ENCODE measurements at regions of chr17 and their contacts with region 1.

Region 1: GRCh38 chr17:76384222-76384986 is at the start of gene SPHK1:
- DNase-seq: peak; percentile 51
- ATAC-seq: peak; percentile 82
- H3K4me3 ChIP-seq: peak within 1 kb of the TSS; percentile 56 to 73
- H3K27ac ChIP-seq: peak within 1 kb of the TSS; percentile 45; the same call in 1 of the 2 replicates
- H3K4me1 ChIP-seq: peaks cover 26 to 41% of the 10 kb centered on the region in 2 experiments
- H3K27me3 ChIP-seq: peaks cover 11% of the 10 kb centered on the region; the same call in 1 of the 2 replicates
- CTCF ChIP-seq: no peak
- POLR2A ChIP-seq: peak; percentile 53
- RAD21 ChIP-seq: no peak
- total RNA-seq, gene SPHK1: 4.6 TPM

Region 2: DNA sequence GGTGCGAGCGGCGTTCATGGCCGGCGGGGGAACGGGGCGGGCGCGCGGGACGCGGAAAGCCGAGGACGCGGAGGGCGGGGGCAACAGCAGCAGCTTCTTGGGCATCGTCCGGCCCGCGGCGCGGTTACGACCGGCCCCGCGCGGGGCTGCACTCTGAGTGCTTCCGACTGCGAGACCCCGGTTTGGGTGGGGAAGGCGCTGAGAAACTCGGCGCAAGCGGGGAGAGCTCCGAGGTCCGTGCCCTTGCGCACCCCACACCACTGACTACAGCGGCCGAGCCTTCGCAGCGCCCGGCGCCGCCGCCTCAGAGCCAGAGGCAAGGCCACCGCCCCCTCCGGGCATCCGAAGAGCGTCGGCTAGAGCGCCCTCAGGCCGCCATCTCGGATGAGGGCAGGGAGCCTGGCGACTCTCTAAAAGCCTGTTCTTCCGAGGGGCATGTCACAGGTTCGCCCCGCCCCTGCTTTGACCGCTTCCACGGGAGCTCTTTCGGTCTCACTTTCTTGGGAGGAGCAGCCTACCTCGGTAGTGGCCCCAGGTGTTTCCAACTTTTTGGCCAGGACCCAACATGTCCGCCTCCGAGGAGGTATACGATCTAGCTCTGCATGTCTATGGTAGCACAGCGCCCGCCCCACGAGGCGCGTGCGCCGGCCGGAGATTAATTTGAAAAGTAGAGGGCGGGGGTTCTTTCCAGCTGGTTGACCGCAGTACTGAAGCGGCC is 30.6 kb before region 1 on chr17 and contains the start of gene PRPSAP1:
- CTCF ChIA-PET with region 1: no interaction called
- POLR2A ChIA-PET with region 1: interaction called, 7 read pairs
- RAD21 ChIA-PET with region 1: no interaction called
- intact Hi-C with region 1: loop called (anchors 5 kb)
- DNase-seq: peak; percentile 93
- ATAC-seq: peak; percentile 96
- H3K4me3 ChIP-seq: peak within 1 kb of the TSS; percentile 93 to 99
- H3K27ac ChIP-seq: peak within 1 kb of the TSS; percentile 89
- H3K4me1 ChIP-seq: peaks cover 0 to 23% of the 10 kb centered on the region in 2 experiments; a peak in 2 of 4 replicates
- H3K27me3 ChIP-seq: no peaks in the 10 kb centered on the region
- CTCF ChIP-seq: peak in 1 of 3 experiments; percentile 62; a peak in 2 of 6 replicates
- POLR2A ChIP-seq: peak; percentile 97
- RAD21 ChIP-seq: no peak; the same call in 1 of the 2 replicates
- total RNA-seq, gene PRPSAP1: 81.4 TPM

Region 3: GRCh38 chr17:76365256-76365903 is 19.0 kb before region 1 on chr17:
- CTCF ChIA-PET with region 1: interaction called, 42 read pairs
- POLR2A ChIA-PET with region 1: interaction called, 3 read pairs
- RAD21 ChIA-PET with region 1: interaction called, 3 read pairs
- intact Hi-C with region 1: loop called (anchors 1 kb)
- DNase-seq: peak; percentile 57
- ATAC-seq: peak; percentile 93
- H3K4me3 ChIP-seq: no peak overlapping the region; a peak in 1 of 4 replicates
- H3K27ac ChIP-seq: no peak overlapping the region
- H3K4me1 ChIP-seq: peaks cover 10 to 16% of the 10 kb centered on the region in 2 experiments; a peak in 3 of 4 replicates
- H3K27me3 ChIP-seq: no peaks in the 10 kb centered on the region
- CTCF ChIP-seq: peak; percentile 80 to 81 (median 80)
- POLR2A ChIP-seq: no peak
- RAD21 ChIP-seq: peak; percentile 73

Region 4: GRCh38 chr17:76370261-76370993 is 14.0 kb before region 1 on chr17:
- CTCF ChIA-PET with region 1: interaction called, 42 read pairs
- POLR2A ChIA-PET with region 1: interaction called, 3 read pairs
- RAD21 ChIA-PET with region 1: interaction called, 3 read pairs
- intact Hi-C with region 1: loop called (anchors 1 kb)
- DNase-seq: no peak
- ATAC-seq: peak; percentile 83
- H3K4me3 ChIP-seq: no peak overlapping the region
- H3K27ac ChIP-seq: no peak overlapping the region
- H3K4me1 ChIP-seq: peaks cover 7 to 27% of the 10 kb centered on the region in 2 experiments; a peak in 3 of 4 replicates
- H3K27me3 ChIP-seq: no peaks in the 10 kb centered on the region
- CTCF ChIP-seq: peak; percentile 80 to 99 (median 97)
- POLR2A ChIP-seq: no peak
- RAD21 ChIP-seq: peak; percentile 43